Cardiac septum (tissue), 1 donor: ENCODE measurements at regions of chr1 and their contacts with region 1.

Region 1: GRCh38 chr1:235504496-235505222 is 407 bp upstream of the B3GALNT2 start:
- DNase-seq: peak; percentile 99

Region 2: DNA sequence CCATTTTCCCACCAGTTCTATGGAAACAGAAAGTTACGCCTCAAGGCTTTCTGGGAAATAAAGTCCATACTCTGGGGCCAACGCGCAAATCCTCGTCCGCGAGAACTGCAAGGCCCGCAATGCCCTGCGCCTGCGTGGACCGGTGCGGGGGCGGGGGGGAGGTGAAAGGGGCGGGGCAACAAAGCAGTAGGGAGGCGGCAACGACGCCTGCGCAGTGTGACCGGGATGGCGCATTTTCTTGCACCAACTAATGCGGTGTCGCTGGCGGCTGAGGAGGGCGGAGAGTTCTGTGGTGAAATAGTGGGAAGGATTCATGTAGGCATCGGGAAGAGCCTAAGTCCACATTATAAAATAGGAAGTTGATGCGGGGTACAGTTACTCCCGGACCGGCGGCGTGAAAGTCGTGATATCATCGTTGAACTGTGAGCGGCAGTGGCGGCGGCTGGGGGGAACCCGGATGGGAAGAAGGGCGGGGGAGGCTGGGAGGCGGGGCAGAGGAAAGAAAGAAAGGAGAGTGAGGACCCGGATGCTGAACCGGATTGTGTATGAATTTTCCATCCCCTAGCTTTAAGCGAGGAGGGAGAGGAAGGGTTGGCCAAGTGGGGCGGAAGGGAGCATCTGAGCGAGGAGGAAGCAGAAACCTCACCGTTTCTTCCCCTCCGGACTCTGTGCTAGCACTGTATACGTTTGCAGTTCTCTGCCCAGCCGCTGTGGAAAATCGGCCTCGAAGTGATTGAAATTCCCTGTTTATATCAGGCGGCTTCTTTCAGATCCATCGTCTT is 176.1 kb before region 1 on chr1 and contains the start of gene GGPS1:
- intact Hi-C with region 1: loop called (anchors 5 kb)
- DNase-seq: peak; percentile 99
- total RNA-seq, gene GGPS1: 36.2 TPM

Region 3: DNA sequence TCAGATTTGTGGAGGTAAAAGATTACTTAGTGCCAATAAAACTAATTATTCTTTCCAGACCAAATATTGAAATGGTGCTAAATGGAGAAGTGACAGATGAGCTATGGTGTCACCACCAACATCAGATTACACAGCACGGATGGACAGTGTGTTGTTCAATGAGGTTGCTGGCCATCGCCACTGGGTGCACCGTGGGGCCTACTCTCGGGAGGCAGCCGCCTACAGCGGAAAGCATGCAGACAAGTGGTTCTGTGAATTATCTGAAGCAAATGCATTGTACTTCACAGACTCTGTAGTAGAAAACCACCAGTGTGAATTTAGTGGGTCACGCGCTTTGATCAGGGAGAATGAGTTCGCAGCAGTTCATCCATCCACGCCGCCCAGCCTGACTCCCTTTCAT is 102.6 kb after region 1 on chr1:
- intact Hi-C with region 1: no loop called
- DNase-seq: no peak

Region 4: DNA sequence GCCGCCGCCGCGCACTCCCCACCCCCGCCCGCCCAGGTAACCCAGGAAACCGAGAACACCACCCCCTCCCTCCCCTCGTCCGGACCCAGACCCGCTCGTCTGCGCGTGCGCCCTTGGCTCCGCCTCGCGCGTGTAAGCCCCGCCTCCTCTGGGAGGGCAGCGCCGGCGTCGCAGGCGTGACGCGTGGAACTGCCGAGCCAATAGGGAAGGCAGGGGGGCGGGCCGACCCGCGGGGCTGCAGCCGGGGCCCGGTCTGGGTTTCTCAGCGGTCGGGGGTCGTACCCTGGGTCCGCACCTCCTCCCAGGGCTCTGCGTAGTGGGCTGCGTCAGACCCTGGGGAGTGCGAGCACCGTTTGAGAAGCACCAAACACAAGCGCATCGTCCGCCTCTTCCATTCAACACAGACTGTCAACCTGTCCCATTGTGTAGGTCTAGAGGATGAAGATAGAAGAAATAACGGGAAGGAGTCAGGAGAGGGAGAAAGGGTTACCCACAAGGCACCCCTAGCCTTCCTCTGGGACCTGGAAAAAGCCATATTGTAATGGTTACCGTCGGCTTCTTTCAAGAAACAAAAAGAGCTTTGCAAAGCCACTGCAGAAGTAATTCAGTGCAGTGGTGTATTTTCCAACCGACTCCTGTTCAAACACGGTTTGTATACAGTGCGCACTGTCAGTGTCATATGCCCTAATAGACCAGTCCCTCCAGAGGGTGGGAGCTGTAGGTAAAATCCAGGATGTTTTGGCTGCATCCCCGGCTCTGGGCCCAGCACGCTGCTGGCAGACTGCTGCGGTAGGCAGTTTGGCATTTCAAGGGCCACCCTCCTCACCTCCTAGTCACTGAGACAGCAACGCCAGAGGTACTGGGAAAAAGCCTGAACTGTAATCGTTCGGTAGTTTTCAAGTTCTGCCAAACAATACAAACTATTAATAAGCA is 362.5 kb after region 1 on chr1:
- intact Hi-C with region 1: loop called (anchors 10 kb)
- DNase-seq: peak; percentile 99

Region 5: GRCh38 chr1:235971571-235972310 is 467.1 kb after region 1 on chr1:
- intact Hi-C with region 1: loop called (anchors 5 kb)
- DNase-seq: peak; percentile 96

Region 6: DNA sequence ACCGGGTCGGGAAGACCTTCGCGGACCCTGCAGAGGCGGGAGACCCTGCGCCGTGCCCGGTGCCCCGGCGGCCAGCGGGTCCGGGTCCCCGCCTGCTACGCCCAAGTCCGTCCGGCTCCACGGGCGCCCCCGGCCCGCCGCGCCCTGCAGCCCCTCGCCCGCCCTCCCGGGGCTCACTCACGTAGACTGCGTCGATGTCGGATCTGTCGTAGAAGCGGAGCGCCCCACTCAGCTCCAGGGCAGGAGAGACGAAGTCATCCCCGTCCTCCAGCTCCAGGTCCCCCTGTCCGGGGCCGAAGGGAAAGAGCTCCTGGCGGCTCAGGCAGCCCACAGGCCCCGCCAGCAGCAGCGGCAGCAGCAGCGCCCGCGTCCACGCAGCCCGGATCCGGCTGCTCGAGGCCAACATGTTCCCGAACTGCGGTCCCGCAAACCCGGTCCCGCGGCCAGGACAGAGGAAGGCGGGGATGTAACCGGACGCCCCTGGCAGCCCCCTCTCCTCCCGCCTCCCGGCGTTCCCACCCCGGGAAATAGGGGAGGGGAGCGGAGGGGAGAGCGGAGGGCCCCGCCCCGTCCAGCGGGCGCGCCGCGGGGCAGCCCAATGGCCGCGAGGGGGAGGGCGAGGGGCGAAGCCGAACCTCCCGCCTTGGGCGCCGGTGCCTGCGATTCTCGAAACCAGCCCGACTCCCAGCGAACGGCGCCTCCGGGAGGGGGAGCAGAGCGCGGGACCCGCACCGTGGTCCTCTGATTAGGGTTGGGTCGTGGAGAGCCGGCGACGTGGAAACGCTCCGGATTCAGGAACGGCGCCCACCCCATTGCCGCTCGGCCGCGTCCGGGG is 560.2 kb after region 1 on chr1 and contains the start of gene NID1:
- intact Hi-C with region 1: loop called (anchors 10 kb)
- DNase-seq: peak; percentile 93
- total RNA-seq, gene NID1: 42.1 TPM

Region 7: GRCh38 chr1:236523701-236524141 is 1019.1 kb after region 1 on chr1 and contains the start of gene LGALS8:
- intact Hi-C with region 1: loop called (anchors 10 kb)
- DNase-seq: peak; percentile 95
- total RNA-seq, gene LGALS8: 77.6 TPM